Head of caudate nucleus (tissue), 42 donors: ENCODE measurements at regions of chr20 and their contacts with region 1.

Region 1: GRCh38 chr20:38221119-38221589 is 39.4 kb downstream of the KIAA1755 start:
- DNase-seq: peak; percentile 40 to 88 (median 72)

Region 2: DNA sequence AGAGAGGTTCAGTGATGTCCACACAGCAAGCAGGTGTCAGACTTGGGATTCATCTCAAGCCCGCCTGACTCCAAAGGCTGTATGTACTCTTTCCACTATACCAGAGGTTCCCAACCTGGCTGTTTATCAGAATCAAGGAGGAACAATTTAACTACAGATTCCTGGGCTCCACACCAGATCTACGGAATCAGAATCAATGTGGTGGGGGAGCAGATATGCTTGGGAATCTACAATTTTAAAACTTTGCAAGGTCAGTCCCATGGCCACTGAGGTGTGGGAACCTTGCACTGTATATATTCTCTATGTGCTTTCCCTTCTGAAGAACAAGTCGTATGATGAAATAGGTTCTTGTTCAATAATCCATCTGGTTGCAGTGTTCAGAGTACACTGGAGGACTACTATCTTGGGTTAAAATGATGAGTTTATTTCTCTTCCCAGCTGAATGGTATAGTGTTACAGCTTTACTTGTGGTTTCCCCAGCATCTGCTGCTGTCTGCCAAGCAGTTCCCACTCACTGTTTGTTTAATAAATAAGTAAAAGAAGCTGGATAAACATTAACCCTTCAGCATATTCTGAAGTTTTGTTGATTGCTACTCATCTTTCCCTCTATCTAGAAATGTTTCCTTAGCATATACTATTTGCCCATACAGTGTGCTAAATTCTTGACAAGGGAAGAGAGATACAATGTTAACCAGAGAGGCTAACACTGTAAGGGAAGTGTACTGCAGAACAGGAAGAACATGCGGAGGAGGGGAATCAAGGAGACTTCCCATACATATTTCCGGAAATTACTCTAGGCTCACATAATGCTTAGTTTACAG is 197.8 kb before region 1 on chr20:
- intact Hi-C with region 1: no loop called
- DNase-seq: no peak

Region 3: GRCh38 chr20:38057351-38057972 is 163.7 kb before region 1 on chr20:
- intact Hi-C with region 1: loop called (anchors 5 kb)
- DNase-seq: peak; percentile 46 to 95 (median 83)

Region 4: GRCh38 chr20:38321959-38322598 is 100.9 kb after region 1 on chr20:
- intact Hi-C with region 1: loop called (anchors 10 kb)
- DNase-seq: peak in 39 of 42 donors; percentile 27 to 86 (median 63)

Region 5: GRCh38 chr20:38863024-38863851 is 642.1 kb after region 1 on chr20:
- intact Hi-C with region 1: no loop called
- DNase-seq: no peak